ENCODE measurements at regions of chr10 and their contacts with region 1.

Region 1: DNA sequence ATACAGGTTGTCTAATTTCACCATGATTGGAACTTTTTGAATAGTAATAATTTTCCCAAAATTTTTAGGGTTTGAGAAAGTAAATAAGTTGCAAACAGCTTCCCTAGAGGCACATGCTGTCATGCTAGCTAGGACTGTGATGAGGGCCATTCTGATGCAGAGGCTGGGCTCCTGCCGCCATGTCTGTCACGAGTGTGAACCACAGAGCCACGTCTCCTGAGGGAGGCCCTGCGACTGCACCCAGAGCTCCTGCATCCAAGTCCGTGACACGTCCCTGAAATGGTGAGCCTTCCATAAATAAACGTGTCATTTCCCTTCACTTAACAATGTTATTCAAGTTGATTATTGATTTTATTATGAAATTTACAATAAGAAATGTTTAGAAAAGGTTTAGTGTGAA is 40.0 kb downstream of the C10orf120 start:
- DNase-seq: no peak
- ATAC-seq: no peak
- H3K4me3 ChIP-seq: no peak overlapping the region
- H3K27ac ChIP-seq: no peak overlapping the region
- H3K4me1 ChIP-seq: peaks cover 4 to 7% (median 5%) of the 10 kb centered on the region in 3 donors
- H3K27me3 ChIP-seq: no peaks in the 10 kb centered on the region
- CTCF ChIP-seq: no peak

Region 2: GRCh38 chr10:122678266-122678665 is 18.6 kb after region 1 on chr10:
- intact Hi-C with region 1: loop called in 1 of 3 experiments (anchors 2 kb)
- DNase-seq: no peak
- ATAC-seq: no peak
- H3K4me3 ChIP-seq: no peak overlapping the region
- H3K27ac ChIP-seq: no peak overlapping the region
- H3K4me1 ChIP-seq: no peaks in the 10 kb centered on the region
- H3K27me3 ChIP-seq: no peaks in the 10 kb centered on the region
- CTCF ChIP-seq: no peak

Region 3: GRCh38 chr10:122774231-122774630 is 114.6 kb after region 1 on chr10:
- intact Hi-C with region 1: no loop called
- DNase-seq: peak in 4 of 6 donors; percentile 32 to 58 (median 42)
- ATAC-seq: peak in 3 of 4 donors; percentile 56 to 78 (median 69)
- H3K4me3 ChIP-seq: no peak overlapping the region
- H3K27ac ChIP-seq: no peak overlapping the region
- H3K4me1 ChIP-seq: no peaks in the 10 kb centered on the region
- H3K27me3 ChIP-seq: no peaks in the 10 kb centered on the region
- CTCF ChIP-seq: no peak

Region 4: DNA sequence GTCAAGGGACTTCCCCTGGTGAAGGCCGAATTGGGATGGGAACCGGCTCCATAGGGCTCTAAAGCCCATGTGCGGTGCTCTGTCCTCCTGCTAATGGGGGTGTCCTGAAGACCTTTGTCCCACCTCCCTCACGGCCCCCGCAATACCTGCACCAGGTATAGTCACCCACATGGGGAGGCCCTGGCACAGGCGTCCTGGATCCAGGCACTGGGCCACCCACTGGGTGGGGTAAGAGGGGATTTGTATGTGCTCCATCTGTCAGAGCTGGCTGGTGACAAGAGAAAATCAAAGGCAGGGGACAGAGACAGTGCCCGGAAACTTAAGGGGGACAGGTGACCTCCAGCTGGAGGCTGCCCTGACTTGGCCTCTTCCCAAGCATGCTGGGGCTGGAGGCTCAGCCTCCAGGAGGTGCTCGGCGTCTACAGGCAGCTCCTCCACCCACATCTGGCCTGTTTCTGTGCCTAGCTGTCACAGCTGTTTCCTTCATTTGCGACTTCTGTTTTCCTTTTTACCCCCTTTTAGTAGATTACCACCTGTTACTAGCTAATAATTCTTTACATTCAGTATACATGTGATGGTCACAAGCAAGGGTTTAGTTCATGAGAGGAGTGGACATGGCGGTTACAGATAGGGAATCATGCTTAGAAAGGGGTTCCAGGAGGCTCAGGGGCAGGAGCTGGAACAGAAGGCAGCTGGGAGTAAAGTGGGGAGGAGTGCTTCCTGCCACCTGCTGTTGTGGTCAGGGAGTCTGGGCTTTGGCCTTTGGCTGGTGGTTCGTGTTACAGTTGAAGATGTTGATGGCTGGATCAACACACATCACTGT is 188.3 kb after region 1 on chr10:
- intact Hi-C with region 1: no loop called
- DNase-seq: peak in 3 of 6 donors; percentile 51 to 57 (median 56)
- ATAC-seq: peak in 1 of 4 donors; percentile 5
- H3K4me3 ChIP-seq: peak overlapping the region in 1 of 4 donors; percentile 21
- H3K27ac ChIP-seq: peak overlapping the region; percentile 39 to 86 (median 62)
- H3K4me1 ChIP-seq: peaks cover 18 to 56% (median 38%) of the 10 kb centered on the region in 3 donors
- H3K27me3 ChIP-seq: no peaks in the 10 kb centered on the region
- CTCF ChIP-seq: no peak

Region 5: GRCh38 chr10:122953827-122954730 is 294.4 kb after region 1 on chr10 and contains the start of gene C10orf88:
- intact Hi-C with region 1: no loop called
- DNase-seq: peak; percentile 96 to 100 (median 98)
- ATAC-seq: peak; percentile 97 to 99 (median 99)
- H3K4me3 ChIP-seq: peak within 1 kb of the TSS; percentile 58 to 85 (median 72)
- H3K27ac ChIP-seq: peak within 1 kb of the TSS in 3 of 4 donors; percentile 10 to 53 (median 51)
- H3K4me1 ChIP-seq: peaks cover 3 to 18% (median 9%) of the 10 kb centered on the region in 3 donors
- H3K27me3 ChIP-seq: no peaks in the 10 kb centered on the region
- CTCF ChIP-seq: no peak
- total RNA-seq, gene C10orf88: 2.2 to 4.4 (median 2.9) TPM

Region 6: GRCh38 chr10:123027861-123028260 is 368.2 kb after region 1 on chr10:
- intact Hi-C with region 1: no loop called
- DNase-seq: no peak
- ATAC-seq: no peak
- H3K4me3 ChIP-seq: no peak overlapping the region
- H3K27ac ChIP-seq: no peak overlapping the region
- H3K4me1 ChIP-seq: no peaks in the 10 kb centered on the region
- H3K27me3 ChIP-seq: no peaks in the 10 kb centered on the region
- CTCF ChIP-seq: no peak